ENCODE measurements at regions of chr2 and their contacts with region 1.

Region 1: GRCh38 chr2:197801033-197801432 is 3.4 kb upstream of the PLCL1 start:
- DNase-seq: no peak
- H3K4me3 Mint-ChIP-seq: no peak overlapping the region
- H3K27ac Mint-ChIP-seq: no peak overlapping the region
- H3K4me1 Mint-ChIP-seq: peaks cover 19% of the 10 kb centered on the region
- H3K27me3 Mint-ChIP-seq: peaks cover 30% of the 10 kb centered on the region

Region 2: DNA sequence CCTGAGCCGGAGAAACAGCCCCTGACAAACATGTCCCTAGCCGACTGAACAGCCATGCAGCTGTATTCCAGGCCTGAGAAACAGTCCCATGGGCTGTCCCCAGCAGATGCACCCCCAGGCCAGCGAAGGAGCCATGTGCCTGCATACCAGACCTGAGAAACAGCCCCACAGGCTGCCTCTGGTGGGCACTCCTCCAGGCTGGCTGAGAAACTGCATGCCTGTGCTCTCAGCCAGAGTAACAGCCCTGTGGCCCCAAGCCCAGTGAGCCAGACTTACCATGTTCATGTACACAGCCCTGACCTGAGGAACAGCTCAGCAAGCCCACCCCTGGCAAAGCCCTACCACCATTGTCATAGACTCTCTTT is 40.8 kb before region 1 on chr2:
- CTCF ChIA-PET with region 1: no interaction called
- POLR2A ChIA-PET with region 1: no interaction called
- DNase-seq: no peak
- H3K4me3 Mint-ChIP-seq: no peak overlapping the region
- H3K27ac Mint-ChIP-seq: no peak overlapping the region
- H3K4me1 Mint-ChIP-seq: no peaks in the 10 kb centered on the region
- H3K27me3 Mint-ChIP-seq: peaks cover 28% of the 10 kb centered on the region

Region 3: DNA sequence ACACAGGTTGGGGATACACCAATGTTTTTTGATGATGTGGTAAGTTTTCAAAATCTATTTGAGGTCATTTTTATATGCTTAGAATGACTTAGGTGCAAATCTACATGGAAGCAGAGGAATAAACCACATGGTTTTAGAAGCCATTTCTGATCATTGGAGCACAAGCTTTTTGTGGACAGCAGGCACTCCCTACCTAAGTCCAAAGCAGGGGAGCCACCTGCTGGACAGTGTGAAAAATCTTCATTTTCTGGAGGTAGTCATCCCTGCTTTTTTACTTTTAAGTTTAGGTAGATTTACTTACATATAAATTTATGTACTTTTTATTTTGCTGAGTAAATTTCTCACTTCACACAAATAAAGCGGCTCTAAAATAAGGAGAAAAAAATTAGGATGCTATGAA is 326.6 kb after region 1 on chr2:
- CTCF ChIA-PET with region 1: interaction called, 14 read pairs
- POLR2A ChIA-PET with region 1: interaction called, 6 read pairs
- DNase-seq: peak; percentile 50
- H3K4me3 Mint-ChIP-seq: no peak overlapping the region
- H3K27ac Mint-ChIP-seq: no peak overlapping the region
- H3K4me1 Mint-ChIP-seq: no peaks in the 10 kb centered on the region
- H3K27me3 Mint-ChIP-seq: no peaks in the 10 kb centered on the region

Measured in activated CD4-positive, alpha-beta memory T cell treated with anti-CD3 and anti-CD28 coated beads, Interleukin-2, amount 10 ng/mL, durations not matched to agents 7 days and 5 days (primary cell).